GM10248 (cell line): ENCODE measurements at regions of chr1 and their contacts with region 1.

Region 1: GRCh38 chr1:9784508-9785133 is 39.1 kb downstream of the CLSTN1 start:
- DNase-seq: peak; percentile 72
- CTCF ChIP-seq: peak; percentile 78

Region 2: GRCh38 chr1:9700340-9700739 is 84.3 kb before region 1 on chr1:
- CTCF ChIA-PET with region 1: no interaction called
- POLR2A ChIA-PET with region 1: no interaction called
- DNase-seq: no peak
- CTCF ChIP-seq: no peak

Region 3: GRCh38 chr1:9766759-9767442 is 17.7 kb before region 1 on chr1:
- CTCF ChIA-PET with region 1: interaction called, 16 read pairs
- POLR2A ChIA-PET with region 1: no interaction called
- DNase-seq: no peak
- CTCF ChIP-seq: no peak

Region 4: DNA sequence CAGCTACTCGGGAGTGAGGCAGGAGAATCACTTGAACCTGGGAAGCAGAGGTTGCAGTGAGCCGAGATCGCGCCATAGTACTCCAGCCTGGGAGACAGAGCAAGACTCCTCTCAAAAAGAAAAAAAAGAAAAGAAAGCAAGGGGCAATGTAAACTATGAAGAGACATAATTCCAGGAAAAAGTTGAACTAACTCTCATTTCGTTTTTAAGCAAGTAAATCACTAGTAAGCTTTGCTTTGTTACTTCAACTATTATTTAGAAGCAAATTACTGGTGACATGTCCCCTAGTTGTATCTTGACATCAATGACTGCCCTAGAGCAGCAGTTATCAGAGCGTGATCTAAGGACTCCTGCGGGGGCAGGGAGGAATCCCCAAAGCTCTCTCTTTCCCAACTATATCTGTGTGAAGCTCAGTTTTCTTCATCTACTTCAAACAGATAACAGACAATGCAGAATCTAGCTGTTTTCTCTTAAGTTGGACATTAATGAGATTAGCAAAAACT is 20.4 kb after region 1 on chr1:
- CTCF ChIA-PET with region 1: interaction called, 24 read pairs
- POLR2A ChIA-PET with region 1: no interaction called
- DNase-seq: no peak
- CTCF ChIP-seq: no peak

Region 5: GRCh38 chr1:9852410-9853248 is 68.0 kb after region 1 on chr1:
- CTCF ChIA-PET with region 1: interaction called, 10 read pairs
- POLR2A ChIA-PET with region 1: no interaction called
- DNase-seq: no peak
- CTCF ChIP-seq: no peak

Region 6: GRCh38 chr1:9874959-9875635 is 90.5 kb after region 1 on chr1:
- CTCF ChIA-PET with region 1: interaction called, 69 read pairs
- POLR2A ChIA-PET with region 1: no interaction called
- DNase-seq: peak; percentile 94
- CTCF ChIP-seq: peak; percentile 82